ENCODE measurements at regions of chr1 and their contacts with region 1.

Region 1: GRCh38 chr1:172002725-172003345 is 161.5 kb downstream of the DNM3 start:
- DNase-seq: peak; percentile 55
- H3K4me3 ChIP-seq: no peak overlapping the region
- CTCF ChIP-seq: peak; percentile 78

Region 2: DNA sequence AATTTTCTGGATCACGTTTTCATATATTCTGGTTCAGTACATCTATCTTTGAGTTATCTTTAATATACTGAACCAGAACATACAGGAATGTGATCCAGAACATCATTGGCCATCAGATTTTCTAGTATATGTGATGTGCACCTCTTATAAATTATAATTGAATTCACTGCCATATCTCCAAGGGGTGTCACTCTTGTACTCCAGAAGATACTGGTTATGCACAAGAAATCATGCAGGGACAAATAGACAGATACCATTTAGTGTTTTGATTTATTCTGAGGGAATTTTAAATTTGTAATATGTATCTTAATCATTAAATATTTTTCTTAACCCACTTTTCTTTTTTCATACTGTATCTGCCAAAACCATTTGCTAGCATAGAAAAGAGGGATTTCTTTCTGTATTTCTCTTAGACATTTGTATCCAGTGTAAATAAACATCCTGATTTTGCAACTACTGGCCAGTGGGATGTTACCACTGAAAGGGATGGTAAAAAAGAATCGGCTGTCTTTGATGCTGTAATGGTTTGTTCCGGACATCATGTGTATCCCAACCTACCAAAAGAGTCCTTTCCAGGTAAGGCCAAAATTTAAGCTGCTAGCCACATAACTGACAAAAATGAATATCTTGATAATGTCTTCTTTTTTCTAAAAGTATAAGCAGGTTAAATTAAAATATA is 895.4 kb before region 1 on chr1:
- in situ Hi-C with region 1: no loop called
- DNase-seq: no peak
- H3K4me3 ChIP-seq: no peak overlapping the region
- CTCF ChIP-seq: no peak

Region 3: DNA sequence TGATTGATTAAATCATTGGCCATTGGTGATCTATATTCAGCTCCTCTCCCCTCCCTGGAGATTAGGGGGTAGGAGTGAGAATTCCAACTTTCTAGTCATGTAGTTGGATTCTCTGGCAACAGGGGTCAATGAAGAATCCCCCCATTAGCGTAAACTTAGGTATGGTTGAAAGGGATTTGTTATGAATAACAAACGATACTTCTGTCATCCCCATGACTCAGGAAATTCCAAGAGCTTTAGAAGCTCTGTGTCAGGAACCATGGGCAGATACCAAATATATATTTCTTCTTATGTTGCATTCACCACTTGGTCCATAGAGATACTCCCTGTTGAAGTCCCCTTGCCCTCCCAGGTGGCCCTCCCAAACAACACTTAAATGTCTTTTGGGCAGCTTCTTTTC is 37.1 kb before region 1 on chr1:
- in situ Hi-C with region 1: no loop called
- DNase-seq: no peak
- H3K4me3 ChIP-seq: no peak overlapping the region
- CTCF ChIP-seq: no peak

Region 4: GRCh38 chr1:172401892-172402291 is 399.1 kb after region 1 on chr1:
- in situ Hi-C with region 1: loop called (anchors 5 kb)
- DNase-seq: no peak
- H3K4me3 ChIP-seq: no peak overlapping the region
- CTCF ChIP-seq: no peak

Measured in astrocyte of the cerebellum (primary cell).